ENCODE measurements at regions of chr2 and their contacts with region 1.

Region 1: DNA sequence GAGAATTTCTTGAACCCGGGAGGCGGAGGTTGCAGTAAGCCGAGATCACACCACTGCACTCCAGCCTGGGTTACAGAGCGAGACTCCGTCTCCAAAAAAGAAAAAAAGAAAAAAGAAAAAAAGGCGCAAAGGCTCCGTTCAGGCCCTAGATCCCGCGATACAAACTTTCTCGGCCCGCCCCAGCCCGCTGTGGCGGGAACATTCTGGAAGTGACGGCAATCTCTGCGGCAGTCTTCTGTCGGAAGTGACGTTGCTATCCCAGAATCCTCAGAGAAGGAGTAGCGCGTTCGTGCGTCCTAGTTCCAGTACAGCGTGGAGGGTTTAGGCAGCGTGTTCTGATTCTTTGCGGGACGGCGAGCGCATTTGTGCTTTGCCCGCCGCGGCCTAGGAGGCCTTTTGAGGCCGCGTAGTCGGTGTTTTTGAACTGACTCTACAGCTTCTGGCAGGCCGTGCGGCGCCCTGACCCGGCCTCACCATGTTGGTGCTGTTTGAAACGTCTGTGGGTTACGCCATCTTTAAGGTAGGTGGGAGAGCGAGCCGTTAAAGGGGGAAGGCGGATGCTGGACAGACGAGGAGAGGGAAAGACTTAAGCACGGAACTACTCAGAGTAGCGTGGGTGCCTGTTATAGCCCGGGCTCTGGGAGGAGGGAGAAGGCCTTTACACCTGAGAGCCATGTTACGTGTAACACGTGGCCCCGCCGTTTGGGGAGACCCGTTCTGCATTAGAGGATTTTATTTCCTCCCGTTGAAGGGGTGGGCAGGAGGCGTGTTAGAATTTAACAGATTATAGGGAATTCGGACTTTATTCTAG is at the start of gene NOP58:
- DNase-seq: peak; percentile 95
- ATAC-seq: peak; percentile 84
- H3K4me3 Mint-ChIP-seq: no peak within 1 kb of the TSS
- H3K27ac Mint-ChIP-seq: peak within 1 kb of the TSS; percentile 78
- H3K4me1 Mint-ChIP-seq: peaks cover 15% of the 10 kb centered on the region
- H3K27me3 Mint-ChIP-seq: no peaks in the 10 kb centered on the region
- total RNA-seq, gene NOP58: 160 to 180 TPM

Region 2: GRCh38 chr2:200888704-200889625 is 1376.7 kb before region 1 on chr2 and contains the starts of genes NIF3L1 and PPIL3:
- CTCF ChIA-PET with region 1: no interaction called
- POLR2A ChIA-PET with region 1: no interaction called
- intact Hi-C with region 1: loop called in 1 of 2 experiments (anchors 1 kb)
- DNase-seq: peak; percentile 99
- ATAC-seq: peak; percentile 83
- H3K4me3 Mint-ChIP-seq: peak within 1 kb of the TSS; percentile 98
- H3K27ac Mint-ChIP-seq: peak within 1 kb of the TSS; percentile 100
- H3K4me1 Mint-ChIP-seq: peaks cover 46% of the 10 kb centered on the region
- H3K27me3 Mint-ChIP-seq: no peaks in the 10 kb centered on the region
- total RNA-seq, gene NIF3L1: 37.0 to 47.7 TPM
- total RNA-seq, gene PPIL3: 52.6 to 53.0 TPM

Region 3: DNA sequence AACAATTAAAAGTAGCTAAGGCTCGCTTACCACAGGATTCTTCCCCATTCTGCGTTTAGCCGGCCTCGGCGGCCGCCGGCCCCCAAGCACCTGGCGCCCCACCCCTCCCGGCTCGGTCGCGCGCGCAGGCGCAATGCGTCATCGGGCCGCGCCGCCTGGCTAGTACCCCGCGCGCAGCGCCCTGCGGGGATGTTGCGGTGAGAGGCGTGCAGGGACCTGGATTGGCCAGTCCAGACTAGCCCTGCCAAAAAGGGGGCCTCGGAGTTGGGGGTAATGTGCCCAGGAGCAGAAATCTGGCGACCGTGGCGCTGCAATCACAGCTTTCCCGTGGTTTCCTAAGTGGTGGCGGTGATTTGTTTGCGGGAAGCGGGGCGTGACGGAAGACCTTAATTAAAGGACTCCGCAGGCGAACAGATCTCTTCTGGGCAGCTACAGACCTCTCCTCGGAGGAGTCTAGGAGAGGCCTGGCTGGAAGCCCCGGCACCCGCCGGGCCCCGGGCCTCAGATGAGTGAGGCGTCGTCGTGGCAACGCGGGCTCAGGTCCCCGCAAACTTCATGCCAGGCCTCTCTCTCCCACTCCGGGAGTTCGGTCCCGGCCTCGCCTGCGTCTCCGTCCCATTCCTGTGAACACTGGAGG is 623.0 kb before region 1 on chr2:
- CTCF ChIA-PET with region 1: no interaction called
- POLR2A ChIA-PET with region 1: no interaction called
- intact Hi-C with region 1: loop called in 1 of 2 experiments (anchors 10 kb)
- DNase-seq: peak; percentile 91
- ATAC-seq: peak; percentile 82
- H3K4me3 Mint-ChIP-seq: peak overlapping the region; percentile 79
- H3K27ac Mint-ChIP-seq: peak overlapping the region; percentile 84
- H3K4me1 Mint-ChIP-seq: peaks cover 9% of the 10 kb centered on the region
- H3K27me3 Mint-ChIP-seq: no peaks in the 10 kb centered on the region

Region 4: DNA sequence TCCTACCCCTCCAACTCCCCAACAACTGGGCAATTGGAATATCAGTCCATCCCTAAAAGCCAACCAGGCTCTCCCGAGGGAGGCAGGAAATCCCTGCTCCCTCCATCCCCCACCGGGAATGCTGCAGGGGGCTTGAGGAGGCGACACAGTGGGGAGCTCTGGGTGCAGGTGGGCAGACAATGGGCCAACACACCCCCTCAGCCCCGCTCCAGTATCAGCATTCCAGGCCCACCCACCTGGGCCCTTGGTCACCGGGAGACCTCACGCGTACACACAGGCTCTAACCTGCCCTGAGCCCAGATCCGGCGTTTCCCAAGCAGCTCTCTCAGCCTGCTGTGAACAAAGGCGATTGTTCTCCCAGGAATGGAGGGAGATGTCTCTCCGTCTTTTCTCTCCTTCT is 269.7 kb before region 1 on chr2:
- CTCF ChIA-PET with region 1: no interaction called
- POLR2A ChIA-PET with region 1: no interaction called
- intact Hi-C with region 1: no loop called
- DNase-seq: no peak
- ATAC-seq: no peak
- H3K4me3 Mint-ChIP-seq: no peak overlapping the region
- H3K27ac Mint-ChIP-seq: no peak overlapping the region
- H3K4me1 Mint-ChIP-seq: no peaks in the 10 kb centered on the region
- H3K27me3 Mint-ChIP-seq: no peaks in the 10 kb centered on the region

Region 5: DNA sequence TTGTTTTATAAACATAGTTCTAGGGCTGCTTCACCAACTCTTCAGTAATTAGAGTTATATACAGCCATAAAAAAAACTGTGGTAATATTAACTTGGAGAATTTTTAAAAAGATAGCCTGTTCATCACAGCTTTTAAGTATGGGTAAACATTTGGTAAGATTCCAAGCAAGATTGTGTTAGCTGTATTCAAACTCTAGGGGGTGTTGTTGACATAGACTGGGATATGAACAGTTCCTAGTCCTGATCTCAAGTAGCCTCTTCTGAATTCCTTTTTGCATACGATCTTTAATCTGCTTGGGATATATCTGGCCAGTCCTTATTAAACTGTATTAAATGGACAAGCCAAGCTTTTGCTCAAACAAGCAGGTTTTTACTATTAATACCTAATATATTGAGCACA is 13.3 kb after region 1 on chr2:
- CTCF ChIA-PET with region 1: interaction called, 18 read pairs
- POLR2A ChIA-PET with region 1: interaction called, 80 read pairs
- intact Hi-C with region 1: loop called (anchors 1 kb)
- DNase-seq: no peak
- ATAC-seq: no peak
- H3K4me3 Mint-ChIP-seq: no peak overlapping the region
- H3K27ac Mint-ChIP-seq: peak overlapping the region; percentile 84
- H3K4me1 Mint-ChIP-seq: peaks cover 46% of the 10 kb centered on the region
- H3K27me3 Mint-ChIP-seq: no peaks in the 10 kb centered on the region

Region 6: GRCh38 chr2:202881570-202881969 is 615.9 kb after region 1 on chr2:
- CTCF ChIA-PET with region 1: no interaction called
- POLR2A ChIA-PET with region 1: interaction called, 12 read pairs
- intact Hi-C with region 1: no loop called
- DNase-seq: no peak
- ATAC-seq: no peak
- H3K4me3 Mint-ChIP-seq: no peak overlapping the region
- H3K27ac Mint-ChIP-seq: no peak overlapping the region
- H3K4me1 Mint-ChIP-seq: no peaks in the 10 kb centered on the region
- H3K27me3 Mint-ChIP-seq: no peaks in the 10 kb centered on the region

Region 7: DNA sequence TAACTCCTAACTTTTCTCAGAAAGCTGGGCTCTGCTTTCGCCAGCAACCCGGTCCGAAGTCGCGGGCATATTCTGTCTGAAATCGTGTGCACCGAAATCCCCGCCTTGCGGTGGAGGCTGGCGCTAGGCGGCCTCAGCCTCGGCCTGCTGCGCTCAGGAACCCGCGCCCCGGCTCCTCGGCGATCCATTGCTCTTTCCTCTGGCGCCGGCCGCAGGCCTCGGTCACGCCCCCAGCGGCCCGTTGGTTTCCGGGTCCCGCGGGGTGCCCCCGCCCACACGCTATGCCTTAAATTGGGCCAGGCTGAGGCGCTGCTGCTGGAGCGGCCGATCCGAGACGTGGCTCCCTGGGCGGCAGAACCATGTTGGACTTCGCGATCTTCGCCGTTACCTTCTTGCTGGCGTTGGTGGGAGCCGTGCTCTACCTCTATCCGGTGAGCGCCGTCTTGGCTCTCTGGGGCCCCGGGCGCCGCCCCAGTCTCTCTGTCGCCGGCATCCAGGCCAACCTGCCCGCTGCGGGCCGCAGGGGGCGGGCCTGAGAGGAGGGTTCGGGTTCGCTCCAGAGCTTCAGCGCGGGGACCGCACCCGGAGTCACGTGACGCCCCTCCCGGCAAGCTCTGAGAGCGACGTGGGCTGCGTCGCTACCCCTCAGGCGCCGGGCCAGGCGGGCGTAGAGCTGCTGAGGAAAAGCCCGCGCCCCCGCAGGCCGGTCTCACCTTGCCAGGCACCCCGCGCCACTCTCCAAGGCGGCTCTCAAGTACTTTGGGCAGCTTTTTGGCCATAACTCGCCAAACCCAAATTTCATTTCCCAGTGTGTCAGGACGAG is 973.2 kb after region 1 on chr2 and contains the start of gene CYP20A1:
- CTCF ChIA-PET with region 1: no interaction called
- POLR2A ChIA-PET with region 1: no interaction called
- intact Hi-C with region 1: loop called in 1 of 2 experiments (anchors 2 kb)
- DNase-seq: peak; percentile 99
- ATAC-seq: peak; percentile 84
- H3K4me3 Mint-ChIP-seq: peak within 1 kb of the TSS; percentile 93
- H3K27ac Mint-ChIP-seq: peak within 1 kb of the TSS; percentile 100
- H3K4me1 Mint-ChIP-seq: peaks cover 30% of the 10 kb centered on the region
- H3K27me3 Mint-ChIP-seq: no peaks in the 10 kb centered on the region
- total RNA-seq, gene CYP20A1: 19.0 to 23.3 TPM